ENCODE measurements at regions of chr5 and their contacts with region 1.

Region 1: DNA sequence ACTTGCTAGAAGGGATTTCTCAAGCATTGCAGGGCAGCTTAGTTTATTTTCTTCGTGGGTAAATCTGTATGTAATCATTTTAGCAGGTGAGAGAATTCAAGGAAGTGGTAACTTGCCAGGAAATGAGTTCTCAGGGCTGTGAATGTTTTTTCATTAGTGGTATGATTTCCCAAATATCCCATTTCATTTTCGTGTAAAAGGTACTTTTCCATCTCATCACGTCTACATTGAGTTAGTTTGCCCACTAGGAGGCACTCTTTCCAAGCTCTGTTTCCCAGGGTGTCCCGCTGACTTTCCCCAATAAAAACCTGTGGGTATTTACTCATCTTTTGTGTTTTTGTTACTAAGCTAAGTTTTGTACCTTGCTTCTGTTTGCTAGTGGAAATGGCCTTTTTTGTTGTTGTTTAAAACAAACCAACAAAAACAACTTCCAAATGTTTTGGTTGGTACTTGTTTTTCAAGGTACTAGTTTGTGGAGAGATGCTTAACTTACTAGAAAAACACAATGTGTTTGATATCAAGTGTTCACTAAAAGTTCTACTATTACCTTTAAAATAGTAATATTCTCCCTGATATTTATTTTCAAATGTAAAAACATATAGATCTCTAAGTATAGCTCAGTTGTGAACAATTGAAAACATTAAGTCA is 373.6 kb downstream of the ADGRV1 start:
- DNase-seq: peak; percentile 52
- ATAC-seq: peak; percentile 71
- H3K4me3 Mint-ChIP-seq: no peak overlapping the region
- H3K27ac Mint-ChIP-seq: no peak overlapping the region
- H3K4me1 Mint-ChIP-seq: peaks cover 2% of the 10 kb centered on the region
- H3K27me3 Mint-ChIP-seq: peaks cover 3% of the 10 kb centered on the region

Region 2: GRCh38 chr5:90675222-90675621 is 257.0 kb before region 1 on chr5:
- CTCF ChIA-PET with region 1: no interaction called
- POLR2A ChIA-PET with region 1: no interaction called
- intact Hi-C with region 1: no loop called
- DNase-seq: no peak
- ATAC-seq: no peak
- H3K4me3 Mint-ChIP-seq: no peak overlapping the region
- H3K27ac Mint-ChIP-seq: no peak overlapping the region
- H3K4me1 Mint-ChIP-seq: no peaks in the 10 kb centered on the region
- H3K27me3 Mint-ChIP-seq: no peaks in the 10 kb centered on the region

Region 3: GRCh38 chr5:90866333-90866732 is 65.8 kb before region 1 on chr5:
- CTCF ChIA-PET with region 1: interaction called, 11 read pairs
- POLR2A ChIA-PET with region 1: no interaction called
- intact Hi-C with region 1: loop called in 1 of 2 experiments (anchors 2 kb)
- DNase-seq: no peak
- ATAC-seq: no peak
- H3K4me3 Mint-ChIP-seq: no peak overlapping the region
- H3K27ac Mint-ChIP-seq: no peak overlapping the region
- H3K4me1 Mint-ChIP-seq: peaks cover 7% of the 10 kb centered on the region
- H3K27me3 Mint-ChIP-seq: peaks cover 15% of the 10 kb centered on the region

Region 4: DNA sequence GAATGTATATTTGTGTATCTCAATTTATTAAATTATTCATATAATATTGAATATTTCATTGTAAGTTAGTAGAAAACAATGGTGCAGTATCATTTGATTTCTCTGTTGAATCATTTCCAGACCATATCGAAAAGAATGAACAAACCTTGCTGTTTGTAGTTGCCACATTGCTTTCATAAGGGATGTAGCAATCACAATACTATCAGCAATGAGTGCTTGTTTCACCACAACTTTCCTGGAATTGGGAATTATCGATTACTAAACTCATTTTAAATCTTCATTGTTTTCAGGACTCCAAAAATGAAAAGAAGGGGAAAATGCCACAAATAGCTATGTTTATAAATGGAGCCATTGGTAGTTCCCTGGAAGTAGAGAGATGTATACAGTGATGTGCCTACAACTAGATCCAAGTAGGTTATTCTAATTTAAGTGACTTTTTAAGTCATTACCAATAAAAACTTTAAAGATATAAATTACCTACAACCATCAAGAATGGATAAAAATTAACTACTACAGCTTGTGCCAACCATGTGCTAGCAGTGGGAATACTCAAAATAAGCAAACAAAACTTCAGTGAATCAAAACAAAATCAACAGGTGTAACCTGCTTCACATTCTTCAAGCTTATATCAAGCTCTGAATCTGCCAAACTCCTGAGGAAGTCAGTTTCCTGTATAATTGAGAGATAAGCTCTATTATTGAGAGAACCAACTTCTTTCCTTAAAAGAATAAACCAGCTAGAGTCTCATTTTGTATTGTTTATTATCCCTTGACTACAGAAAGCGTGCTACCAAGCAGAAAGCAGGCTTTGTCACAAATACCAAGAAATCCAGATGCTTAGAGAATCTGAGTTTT is 15.0 kb before region 1 on chr5:
- CTCF ChIA-PET with region 1: interaction called, 12 read pairs
- POLR2A ChIA-PET with region 1: no interaction called
- intact Hi-C with region 1: no loop called
- DNase-seq: no peak
- ATAC-seq: no peak
- H3K4me3 Mint-ChIP-seq: no peak overlapping the region
- H3K27ac Mint-ChIP-seq: no peak overlapping the region
- H3K4me1 Mint-ChIP-seq: no peaks in the 10 kb centered on the region
- H3K27me3 Mint-ChIP-seq: peaks cover 4% of the 10 kb centered on the region

Region 5: DNA sequence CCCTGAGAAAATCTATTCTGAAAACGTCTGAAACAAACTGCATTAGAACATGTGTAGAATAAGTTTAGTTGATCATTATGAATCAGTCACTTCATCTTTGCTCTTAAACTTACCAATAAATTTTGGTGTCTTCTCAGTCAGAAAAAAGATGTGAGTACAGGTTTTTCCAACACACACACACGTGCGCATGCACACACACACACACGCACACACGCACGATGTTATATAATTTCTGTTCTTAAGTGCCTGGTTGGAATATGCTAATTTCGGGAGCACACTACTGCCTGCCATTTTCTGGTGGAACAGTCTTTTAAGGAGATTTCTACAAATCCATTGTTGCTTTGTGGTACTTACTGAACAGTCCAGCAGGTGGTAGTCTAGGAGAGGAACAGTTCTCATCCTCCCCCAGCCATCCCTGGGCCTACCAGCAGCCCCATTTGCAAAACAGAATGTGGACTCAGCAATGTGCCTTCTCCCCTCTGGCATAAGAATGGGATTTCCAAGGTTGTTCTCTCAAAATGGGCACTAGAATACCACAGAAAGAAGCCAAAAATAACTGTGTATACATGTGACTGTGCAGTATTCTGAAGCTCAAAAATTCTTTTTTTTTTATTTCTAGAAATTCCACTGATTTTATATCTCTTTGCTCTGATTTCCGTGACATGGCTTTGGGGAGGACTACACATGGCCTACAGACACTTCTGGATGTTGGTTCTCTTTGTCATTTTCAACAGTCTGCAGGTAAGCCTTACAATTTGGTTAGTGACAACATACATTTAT is 169.6 kb after region 1 on chr5:
- CTCF ChIA-PET with region 1: interaction called, 6 read pairs
- POLR2A ChIA-PET with region 1: no interaction called
- intact Hi-C with region 1: loop called (anchors 2 to 10 kb)
- DNase-seq: peak; percentile 76
- ATAC-seq: peak; percentile 89
- H3K4me3 Mint-ChIP-seq: no peak overlapping the region
- H3K27ac Mint-ChIP-seq: no peak overlapping the region
- H3K4me1 Mint-ChIP-seq: no peaks in the 10 kb centered on the region
- H3K27me3 Mint-ChIP-seq: peaks cover 13% of the 10 kb centered on the region

Region 6: GRCh38 chr5:91219803-91220371 is 287.7 kb after region 1 on chr5:
- CTCF ChIA-PET with region 1: interaction called, 3 read pairs
- POLR2A ChIA-PET with region 1: no interaction called
- intact Hi-C with region 1: loop called (anchors 2 to 5 kb)
- DNase-seq: peak; percentile 66
- ATAC-seq: peak; percentile 51
- H3K4me3 Mint-ChIP-seq: no peak overlapping the region
- H3K27ac Mint-ChIP-seq: no peak overlapping the region
- H3K4me1 Mint-ChIP-seq: no peaks in the 10 kb centered on the region
- H3K27me3 Mint-ChIP-seq: no peaks in the 10 kb centered on the region

Region 7: DNA sequence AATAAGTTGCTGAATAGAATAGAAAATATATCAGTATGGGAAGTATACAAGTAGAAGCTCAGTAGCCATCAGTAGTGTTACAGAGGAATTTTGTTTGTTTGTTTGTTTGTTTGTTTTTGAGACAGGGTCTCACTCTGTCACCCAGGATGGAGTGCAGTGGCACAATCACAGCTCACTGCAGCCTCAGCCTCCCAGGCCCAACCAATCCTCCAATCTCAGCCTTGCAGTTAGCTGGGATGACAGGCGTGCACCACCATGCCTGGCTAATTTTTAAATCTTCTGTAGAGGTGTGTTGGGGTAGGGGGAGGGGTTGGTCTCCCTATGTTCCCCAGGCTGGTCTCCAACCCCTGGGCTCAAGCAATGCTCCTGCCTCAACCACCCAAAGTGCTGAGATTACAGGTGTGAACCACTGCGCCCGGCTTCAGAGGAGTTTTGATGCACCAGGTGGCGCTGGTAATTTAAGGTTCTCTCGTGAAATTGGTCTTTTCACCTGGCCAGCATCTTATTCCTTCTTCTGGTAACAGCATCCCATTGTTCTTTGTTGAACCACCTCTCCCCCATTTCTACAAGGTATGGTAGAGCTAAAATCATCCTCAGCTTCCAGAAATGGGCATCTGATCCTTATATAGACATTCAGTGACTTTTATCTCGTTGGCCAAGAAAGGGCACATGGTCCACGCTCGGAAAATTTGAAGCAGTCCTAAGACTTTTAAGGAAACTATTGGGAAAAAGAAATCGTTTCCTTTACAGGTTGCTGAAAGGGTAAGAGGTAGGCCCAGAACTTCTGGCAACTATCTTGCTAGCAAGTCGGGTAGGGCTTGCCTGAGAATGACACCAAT is 293.9 kb after region 1 on chr5:
- CTCF ChIA-PET with region 1: interaction called, 3 read pairs
- POLR2A ChIA-PET with region 1: no interaction called
- intact Hi-C with region 1: loop called in 1 of 2 experiments (anchors 5 kb)
- DNase-seq: peak; percentile 79
- ATAC-seq: peak; percentile 75
- H3K4me3 Mint-ChIP-seq: no peak overlapping the region
- H3K27ac Mint-ChIP-seq: no peak overlapping the region
- H3K4me1 Mint-ChIP-seq: no peaks in the 10 kb centered on the region
- H3K27me3 Mint-ChIP-seq: peaks cover 7% of the 10 kb centered on the region